Esophagus muscularis mucosa (tissue), 4 donors: ENCODE measurements at regions of chr4 and their contacts with region 1.

Region 1: DNA sequence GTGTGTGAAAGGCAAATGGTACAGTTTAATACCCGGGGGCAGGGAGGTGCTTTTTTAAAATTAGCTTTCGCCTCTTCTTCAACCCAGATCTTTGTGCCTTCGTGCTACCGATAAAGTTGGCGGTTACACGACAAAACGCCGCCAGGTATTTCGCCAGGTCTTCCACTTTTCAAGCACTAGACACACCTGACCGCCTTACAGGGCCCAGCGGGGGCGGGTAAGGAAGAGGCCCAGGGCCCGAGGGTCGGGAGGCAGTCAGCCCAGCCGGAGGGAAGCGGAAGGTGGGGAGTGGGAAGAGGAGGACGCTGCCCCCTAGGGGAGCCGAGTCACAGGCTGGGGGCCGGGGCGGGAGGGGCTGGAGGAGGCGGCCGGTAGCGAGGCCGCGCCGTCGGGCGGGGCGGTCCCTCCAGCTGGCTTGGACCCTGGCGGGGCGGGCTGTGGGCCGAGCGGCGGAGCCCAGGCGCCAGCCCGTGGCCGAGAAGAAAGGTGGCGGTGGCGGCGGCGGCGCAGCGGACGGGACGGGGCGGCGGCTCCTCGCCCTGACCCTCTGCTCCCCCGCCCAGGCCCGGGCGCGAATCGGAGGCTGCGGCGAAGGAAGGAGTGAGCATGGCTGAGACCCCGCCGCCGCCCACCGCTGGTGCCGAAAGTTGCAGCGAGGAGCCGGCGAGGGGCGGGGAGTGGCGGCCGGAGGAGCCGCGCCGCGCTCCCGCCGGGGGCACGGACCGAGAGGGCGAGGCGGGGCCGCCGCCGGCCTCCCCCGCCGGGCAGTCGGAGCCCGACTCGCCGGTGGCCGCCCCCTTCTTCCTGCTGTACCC is 16.2 kb downstream of the UTP3 start:
- DNase-seq: peak; percentile 93
- H3K4me3 ChIP-seq: peak overlapping the region; percentile 92 to 94 (median 94)
- H3K27ac ChIP-seq: peak overlapping the region; percentile 93 to 98 (median 95)
- H3K4me1 ChIP-seq: peaks cover 19 to 30% (median 28%) of the 10 kb centered on the region in 4 donors
- H3K27me3 ChIP-seq: no peaks in the 10 kb centered on the region
- CTCF ChIP-seq: peak; percentile 10 to 43 (median 43)
- EP300 ChIP-seq: no peak
- POLR2A ChIP-seq: no peak

Region 2: GRCh38 chr4:70687821-70688794 is 16.4 kb before region 1 on chr4 and contains the start of gene UTP3:
- intact Hi-C with region 1: loop called (anchors 2 kb)
- DNase-seq: peak; percentile 98
- H3K4me3 ChIP-seq: peak within 1 kb of the TSS; percentile 79 to 94 (median 90)
- H3K27ac ChIP-seq: peak within 1 kb of the TSS; percentile 91 to 97 (median 95)
- H3K4me1 ChIP-seq: peaks cover 30 to 46% (median 38%) of the 10 kb centered on the region in 4 donors
- H3K27me3 ChIP-seq: no peaks in the 10 kb centered on the region
- CTCF ChIP-seq: peak; percentile 88 to 95 (median 92)
- EP300 ChIP-seq: no peak
- POLR2A ChIP-seq: no peak
- total RNA-seq, gene UTP3: 19.9 to 31.3 (median 21.8) TPM

Region 3: GRCh38 chr4:70901984-70902576 is 197.5 kb after region 1 on chr4 and contains the start of gene MOB1B:
- intact Hi-C with region 1: loop called (anchors 10 kb)
- DNase-seq: peak; percentile 96
- H3K4me3 ChIP-seq: peak within 1 kb of the TSS; percentile 70 to 83 (median 74)
- H3K27ac ChIP-seq: peak within 1 kb of the TSS; percentile 84 to 89 (median 87)
- H3K4me1 ChIP-seq: peaks cover 0 to 30% (median 21%) of the 10 kb centered on the region in 4 donors
- H3K27me3 ChIP-seq: no peaks in the 10 kb centered on the region
- CTCF ChIP-seq: peak in 1 of 3 experiments; percentile 59
- EP300 ChIP-seq: no peak
- POLR2A ChIP-seq: no peak
- total RNA-seq, gene MOB1B: 15.0 to 19.4 (median 16.6) TPM

Region 4: GRCh38 chr4:70993181-70994068 is 288.9 kb after region 1 on chr4 and contains the start of gene DCK:
- intact Hi-C with region 1: loop called (anchors 10 kb)
- DNase-seq: peak; percentile 97
- H3K4me3 ChIP-seq: peak within 1 kb of the TSS; percentile 78 to 88 (median 80)
- H3K27ac ChIP-seq: peak within 1 kb of the TSS; percentile 85 to 90 (median 87)
- H3K4me1 ChIP-seq: peaks cover 11 to 47% (median 38%) of the 10 kb centered on the region in 4 donors
- H3K27me3 ChIP-seq: no peaks in the 10 kb centered on the region
- CTCF ChIP-seq: no peak
- EP300 ChIP-seq: no peak
- POLR2A ChIP-seq: no peak
- total RNA-seq, gene DCK: 13.7 to 16.8 (median 14.8) TPM